Activated CD4-positive, alpha-beta memory T cell treated with anti-CD3 and anti-CD28 coated beads for 36 hours (primary cell): ENCODE measurements at regions of chr22 and their contacts with region 1.

Region 1: GRCh38 chr22:39940757-39941305 is 19.4 kb upstream of the TMA7B start:
- DNase-seq: no peak
- H3K4me3 Mint-ChIP-seq: peak overlapping the region; percentile 28
- H3K27ac Mint-ChIP-seq: peak overlapping the region; percentile 54
- H3K4me1 Mint-ChIP-seq: peaks cover 91% of the 10 kb centered on the region
- H3K27me3 Mint-ChIP-seq: no peaks in the 10 kb centered on the region

Region 2: GRCh38 chr22:39622881-39623367 is 317.9 kb before region 1 on chr22:
- CTCF ChIA-PET with region 1: interaction called, 3 read pairs
- POLR2A ChIA-PET with region 1: no interaction called
- intact Hi-C with region 1: loop called (anchors 2 kb)
- DNase-seq: peak; percentile 78
- H3K4me3 Mint-ChIP-seq: no peak overlapping the region
- H3K27ac Mint-ChIP-seq: no peak overlapping the region
- H3K4me1 Mint-ChIP-seq: peaks cover 4% of the 10 kb centered on the region
- H3K27me3 Mint-ChIP-seq: peaks cover 4% of the 10 kb centered on the region

Region 3: DNA sequence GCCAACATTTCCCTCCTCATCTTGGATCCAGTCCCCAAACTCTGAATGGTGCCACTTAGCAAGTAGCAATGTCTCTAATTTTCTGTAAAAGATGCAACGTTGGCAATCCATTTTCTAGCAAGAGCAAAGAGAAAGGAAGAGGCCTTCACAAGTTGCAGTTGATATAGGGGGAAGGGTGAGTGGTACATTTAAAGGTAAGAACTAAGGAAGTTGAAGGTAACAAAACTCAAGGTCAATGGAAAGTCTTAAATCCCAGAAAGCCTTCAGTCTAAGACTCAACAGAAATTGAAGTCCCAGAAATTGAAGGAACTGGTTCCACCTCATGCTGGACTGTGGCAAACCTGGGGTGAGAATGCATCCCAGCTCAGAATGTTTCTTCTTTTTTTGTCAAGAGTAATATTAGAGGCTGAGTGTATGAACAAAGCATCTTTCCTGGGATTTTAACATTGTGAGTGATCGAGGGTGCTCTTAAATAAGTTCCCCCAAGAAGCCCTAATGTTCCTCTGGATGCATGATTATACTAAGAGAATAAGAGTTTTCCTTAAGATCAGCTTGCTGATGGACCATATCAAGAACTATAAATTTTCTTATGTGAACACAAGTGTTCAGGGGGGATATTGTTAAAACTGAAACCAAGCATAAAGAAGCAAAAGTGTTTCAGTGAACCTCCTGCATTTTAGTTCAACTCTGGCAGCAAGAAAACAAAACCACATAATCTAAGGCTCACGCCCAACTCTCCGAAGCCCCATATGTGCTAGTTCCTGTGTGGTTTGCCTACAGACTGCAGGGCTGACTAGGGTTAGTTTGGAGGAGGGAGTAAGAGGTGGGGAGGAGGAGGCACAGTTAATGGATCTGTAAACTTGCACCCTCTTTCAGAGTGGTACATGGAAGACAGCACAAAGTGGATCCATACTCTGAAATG is 40.3 kb before region 1 on chr22 and contains the start of gene GRAP2:
- CTCF ChIA-PET with region 1: interaction called, 3 read pairs
- POLR2A ChIA-PET with region 1: interaction called, 5 read pairs
- intact Hi-C with region 1: loop called (anchors 5 kb)
- DNase-seq: peak; percentile 80
- H3K4me3 Mint-ChIP-seq: peak within 1 kb of the TSS; percentile 84
- H3K27ac Mint-ChIP-seq: peak within 1 kb of the TSS; percentile 93
- H3K4me1 Mint-ChIP-seq: peaks cover 18% of the 10 kb centered on the region
- H3K27me3 Mint-ChIP-seq: no peaks in the 10 kb centered on the region
- total RNA-seq, gene GRAP2: 37.7 to 38.1 TPM